Sigmoid colon (tissue), 7 donors: ENCODE measurements at regions of chr19 and their contacts with region 1.

Region 1: GRCh38 chr19:39341719-39342604 is at the start of gene SAMD4B:
- DNase-seq: peak; percentile 99
- H3K4me3 ChIP-seq: peak within 1 kb of the TSS; percentile 86 to 96 (median 92)
- H3K27ac ChIP-seq: peak within 1 kb of the TSS; percentile 89 to 95 (median 91)
- H3K4me1 ChIP-seq: peaks cover 0 to 51% (median 50%) of the 10 kb centered on the region in 4 donors
- H3K27me3 ChIP-seq: no peaks in the 10 kb centered on the region
- CTCF ChIP-seq: peak; percentile 61 to 78 (median 68)
- EP300 ChIP-seq: no peak
- POLR2A ChIP-seq: peak; percentile 83
- total RNA-seq, gene SAMD4B: 37.8 to 83.6 (median 65.4) TPM

Region 2: DNA sequence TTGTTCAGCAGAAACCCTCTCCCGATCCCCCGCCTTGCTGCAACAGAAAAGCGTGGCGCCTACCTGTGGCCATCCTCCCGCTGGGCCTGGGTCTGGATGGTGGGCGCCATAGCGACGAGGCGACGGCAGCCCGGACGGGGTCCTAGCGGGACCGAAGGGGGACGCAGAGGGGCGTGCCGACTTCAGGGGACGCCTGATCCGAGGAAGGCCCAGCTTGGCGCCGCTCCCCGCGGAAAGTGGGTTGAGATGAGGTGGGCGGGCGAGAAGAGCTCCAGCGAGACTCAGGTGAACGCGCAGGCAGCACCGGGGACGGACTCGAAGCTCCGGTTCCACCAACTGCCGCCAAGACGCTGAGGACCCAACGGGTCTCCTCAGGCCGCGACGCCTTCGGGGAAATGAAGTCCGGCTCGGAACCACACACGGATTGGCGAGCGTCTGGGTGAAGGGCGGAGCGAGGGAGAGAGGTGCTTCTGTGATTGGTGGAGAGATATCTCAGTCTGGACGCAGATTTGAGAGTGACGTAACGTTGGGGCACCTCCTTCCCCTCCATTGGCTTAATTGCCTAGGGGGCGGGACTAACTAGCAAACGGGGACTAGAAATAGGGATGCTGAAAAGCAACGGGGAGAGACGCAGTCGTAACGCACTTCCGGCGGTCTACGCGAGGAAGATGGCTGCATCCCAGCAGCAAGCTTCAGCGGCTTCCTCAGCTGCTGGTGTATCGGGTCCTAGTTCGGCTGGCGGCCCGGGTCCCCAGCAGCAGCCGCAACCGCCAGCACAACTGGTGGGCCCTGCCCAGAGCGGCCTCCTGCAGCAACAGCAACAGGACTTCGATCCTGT is 49.0 kb after region 1 on chr19 and contains the starts of genes MED29 and PAF1:
- intact Hi-C with region 1: loop called (anchors 2 kb)
- DNase-seq: peak; percentile 99
- H3K4me3 ChIP-seq: peak within 1 kb of the TSS; percentile 71 to 98 (median 98)
- H3K27ac ChIP-seq: peak within 1 kb of the TSS; percentile 99 to 100 (median 100)
- H3K4me1 ChIP-seq: peaks cover 0 to 26% (median 26%) of the 10 kb centered on the region in 4 donors
- H3K27me3 ChIP-seq: no peaks in the 10 kb centered on the region
- CTCF ChIP-seq: no peak
- EP300 ChIP-seq: peak in 1 of 4 donors; percentile 2
- POLR2A ChIP-seq: peak; percentile 88 to 89
- total RNA-seq, gene MED29: 25.2 to 44.6 (median 33.7) TPM
- total RNA-seq, gene PAF1: 37.5 to 51.8 (median 43.5) TPM

Region 3: GRCh38 chr19:39412100-39412866 is 70.3 kb after region 1 on chr19 and contains the start of gene PLEKHG2:
- intact Hi-C with region 1: loop called (anchors 2 kb)
- DNase-seq: peak; percentile 100
- H3K4me3 ChIP-seq: peak within 1 kb of the TSS; percentile 83 to 99 (median 91)
- H3K27ac ChIP-seq: peak within 1 kb of the TSS; percentile 100
- H3K4me1 ChIP-seq: peaks cover 0 to 59% (median 47%) of the 10 kb centered on the region in 4 donors
- H3K27me3 ChIP-seq: no peaks in the 10 kb centered on the region
- CTCF ChIP-seq: peak; percentile 85 to 95 (median 90)
- EP300 ChIP-seq: peak in 2 of 4 donors; percentile 69 to 70
- POLR2A ChIP-seq: peak; percentile 60 to 89
- total RNA-seq, gene PLEKHG2: 8.2 to 28.8 (median 12.5) TPM

Region 4: DNA sequence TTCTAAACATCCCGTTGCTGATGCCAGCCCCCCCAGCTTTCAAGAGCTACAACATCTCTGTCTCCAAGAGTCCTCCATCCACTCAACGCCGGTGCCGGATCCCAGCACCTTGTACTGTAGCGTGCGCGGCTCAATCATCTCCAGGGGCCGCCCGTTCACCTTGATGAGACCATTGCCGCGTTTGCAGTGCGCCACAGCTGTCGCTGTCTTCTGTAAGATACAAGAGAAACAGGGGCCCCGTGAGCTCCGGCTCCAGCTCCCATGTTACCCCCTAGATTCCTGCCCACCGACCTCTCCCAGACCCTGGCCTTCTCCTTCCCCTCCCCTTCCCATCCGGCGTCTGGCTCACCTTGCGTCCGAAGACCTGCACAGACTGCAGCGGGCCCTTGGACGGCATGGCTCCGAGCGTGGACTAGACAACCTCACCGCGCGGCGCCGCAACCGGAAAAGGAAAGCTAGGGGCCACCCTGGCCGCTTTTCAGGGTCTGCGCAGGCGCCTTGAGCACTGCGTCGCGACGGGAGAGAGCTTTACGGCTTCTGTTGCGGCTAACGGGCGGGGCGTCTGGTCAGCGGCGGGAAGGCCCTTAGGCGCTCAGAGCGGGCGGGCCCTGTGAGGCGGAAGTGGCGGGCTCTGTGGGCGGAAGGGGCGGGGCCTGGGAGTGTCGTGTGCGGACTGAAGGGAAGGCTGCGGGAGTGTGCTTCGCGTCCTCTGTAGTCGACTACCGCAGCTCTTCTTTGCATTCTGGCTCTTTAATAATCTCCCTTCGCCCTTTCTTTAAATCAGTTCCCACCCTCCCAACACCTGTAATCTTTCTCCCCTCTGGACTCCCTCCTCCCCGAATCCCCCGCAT is 93.8 kb after region 1 on chr19 and contains the start of gene RPS16:
- intact Hi-C with region 1: loop called (anchors 5 kb)
- DNase-seq: peak; percentile 100
- H3K4me3 ChIP-seq: peak within 1 kb of the TSS; percentile 90 to 99 (median 96)
- H3K27ac ChIP-seq: peak within 1 kb of the TSS; percentile 89 to 95 (median 91)
- H3K4me1 ChIP-seq: peaks cover 0 to 34% (median 32%) of the 10 kb centered on the region in 4 donors
- H3K27me3 ChIP-seq: peaks cover 0 to 3% (median 0%) of the 10 kb centered on the region in 3 donors
- CTCF ChIP-seq: no peak
- EP300 ChIP-seq: peak in 1 of 4 donors; percentile 63
- POLR2A ChIP-seq: peak; percentile 94 to 98
- total RNA-seq, gene RPS16: 1,648 to 4,043 (median 3,423) TPM

Region 5: GRCh38 chr19:39445265-39446111 is 103.5 kb after region 1 on chr19 and contains the start of gene SUPT5H:
- intact Hi-C with region 1: loop called (anchors 5 kb)
- DNase-seq: peak; percentile 99
- H3K4me3 ChIP-seq: peak within 1 kb of the TSS; percentile 60 to 96 (median 95)
- H3K27ac ChIP-seq: peak within 1 kb of the TSS; percentile 91 to 95 (median 94)
- H3K4me1 ChIP-seq: peaks cover 0 to 41% (median 37%) of the 10 kb centered on the region in 4 donors
- H3K27me3 ChIP-seq: no peaks in the 10 kb centered on the region
- CTCF ChIP-seq: no peak
- EP300 ChIP-seq: peak in 2 of 4 donors; percentile 14 to 17
- POLR2A ChIP-seq: peak; percentile 95 to 96
- total RNA-seq, gene SUPT5H: 72.1 to 104 (median 89.1) TPM

Region 6: DNA sequence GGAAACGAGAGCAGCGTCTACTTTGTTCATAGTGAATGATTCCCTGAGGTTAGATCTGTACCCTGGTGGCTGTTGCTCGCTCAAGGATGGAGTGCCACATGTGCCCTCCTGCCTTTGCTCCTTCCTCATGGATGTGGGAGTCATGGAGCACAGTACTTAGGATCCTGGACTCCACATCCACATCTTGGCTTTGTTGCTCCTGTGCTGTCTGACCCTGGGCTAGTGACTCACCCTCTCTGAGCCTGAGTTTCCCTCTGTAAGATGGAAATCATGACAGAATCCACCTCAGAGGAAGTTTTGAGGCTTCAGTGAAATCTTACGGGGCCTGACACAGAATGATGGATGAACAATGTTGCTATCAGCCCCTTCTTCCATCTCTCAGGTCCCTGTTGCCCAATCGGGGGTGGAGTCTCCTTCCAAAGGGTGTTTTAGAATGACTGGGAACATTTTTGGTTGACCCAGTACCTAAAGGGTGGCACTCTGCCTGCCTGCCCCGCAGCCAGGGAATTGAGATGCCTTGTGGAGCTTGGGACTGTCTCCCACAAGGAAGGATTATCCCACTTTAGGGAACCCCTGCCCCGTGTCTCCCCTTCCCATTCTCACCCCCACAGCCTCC is 128.9 kb after region 1 on chr19:
- intact Hi-C with region 1: no loop called
- DNase-seq: no peak
- H3K4me3 ChIP-seq: no peak overlapping the region
- H3K27ac ChIP-seq: no peak overlapping the region
- H3K4me1 ChIP-seq: no peaks in the 10 kb centered on the region
- H3K27me3 ChIP-seq: no peaks in the 10 kb centered on the region
- CTCF ChIP-seq: no peak
- EP300 ChIP-seq: no peak
- POLR2A ChIP-seq: no peak

Region 7: DNA sequence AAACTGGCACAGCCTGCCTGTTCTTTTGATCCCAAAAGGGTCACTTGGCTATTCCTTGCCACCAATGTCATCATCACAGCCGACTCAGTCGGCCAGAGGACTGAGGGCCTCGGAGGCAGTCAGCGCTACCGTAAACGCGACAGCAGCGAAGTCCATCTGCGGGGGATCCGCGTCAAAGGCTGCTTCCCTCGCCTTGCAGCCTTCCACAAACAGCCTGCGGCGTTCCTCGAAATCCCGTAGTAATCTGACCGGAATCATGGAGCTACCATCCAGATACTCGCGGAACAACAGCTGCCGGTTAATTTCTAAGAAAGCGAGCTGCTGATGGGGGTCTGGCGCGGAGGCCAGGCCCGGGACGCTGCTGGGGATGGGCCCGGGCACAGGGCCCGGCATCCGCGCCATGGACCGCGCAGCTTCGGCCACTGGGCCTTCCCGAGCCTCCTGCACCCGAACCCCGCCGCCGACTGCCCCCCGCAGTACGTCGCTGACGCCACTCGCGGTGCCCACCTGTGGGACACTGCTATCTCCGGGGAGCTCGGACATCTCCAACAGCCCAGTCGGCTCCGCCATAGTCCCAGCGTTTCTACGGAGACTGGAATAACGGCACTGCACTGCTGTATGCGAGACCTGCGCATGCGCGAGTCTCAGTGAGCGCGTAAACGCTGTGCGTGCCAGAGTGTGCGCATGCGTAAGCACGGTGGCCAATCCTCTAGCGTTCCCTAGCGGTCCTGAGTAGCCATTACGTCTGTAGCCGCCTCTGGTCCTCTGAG is 190.5 kb after region 1 on chr19 and contains the start of gene EID2B:
- intact Hi-C with region 1: loop called (anchors 5 kb)
- DNase-seq: peak; percentile 98
- H3K4me3 ChIP-seq: peak within 1 kb of the TSS; percentile 70 to 89 (median 78)
- H3K27ac ChIP-seq: peak within 1 kb of the TSS; percentile 86 to 94 (median 92)
- H3K4me1 ChIP-seq: peaks cover 0 to 26% (median 13%) of the 10 kb centered on the region in 4 donors
- H3K27me3 ChIP-seq: no peaks in the 10 kb centered on the region
- CTCF ChIP-seq: peak; percentile 94 to 99 (median 98)
- EP300 ChIP-seq: no peak
- POLR2A ChIP-seq: peak; percentile 44 to 74
- total RNA-seq, gene EID2B: 3.9 to 7.7 (median 5.3) TPM